ENCODE measurements at regions of chr13 and their contacts with region 1.

Region 1: GRCh38 chr13:26017196-26017921 is 34.5 kb downstream of the SHISA2 start:
- DNase-seq: no peak
- H3K4me3 ChIP-seq: no peak overlapping the region
- H3K27ac ChIP-seq: peak overlapping the region; percentile 89
- H3K4me1 ChIP-seq: peaks cover 81% of the 10 kb centered on the region
- H3K27me3 ChIP-seq: no peaks in the 10 kb centered on the region
- CTCF ChIP-seq: no peak
- POLR2A ChIP-seq: no peak

Region 2: DNA sequence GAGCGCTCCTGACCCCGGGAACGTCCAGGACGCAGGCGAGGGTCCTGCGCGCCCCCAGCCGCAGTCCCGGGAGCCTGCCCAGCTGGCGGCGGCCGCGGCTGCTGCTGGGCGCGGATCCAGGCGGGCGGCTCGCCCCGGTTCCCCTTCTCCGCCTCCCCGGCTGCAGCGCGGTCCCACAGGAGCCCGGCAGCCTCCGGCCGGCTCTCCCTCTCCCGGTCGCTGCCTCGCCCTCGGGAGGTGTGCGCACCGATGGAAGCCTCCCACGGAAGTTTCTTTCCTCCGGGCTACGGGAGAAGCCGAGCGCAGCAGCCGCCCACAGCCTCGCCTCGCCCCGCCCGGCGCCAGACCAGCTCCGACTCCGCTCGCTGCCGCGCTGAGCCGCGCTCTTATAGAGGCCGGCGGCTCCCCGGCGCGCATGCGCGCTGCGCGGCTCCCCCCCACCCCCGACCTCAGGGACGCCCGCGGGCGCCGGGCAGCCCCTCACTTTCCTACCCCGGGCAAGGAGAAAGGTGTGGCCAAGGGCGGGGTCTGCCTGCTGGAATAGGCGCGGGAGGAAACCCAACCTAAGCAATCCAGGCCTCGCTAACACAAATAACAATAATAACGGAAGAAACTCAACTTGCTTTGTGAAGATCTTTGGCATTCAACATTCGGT is 34.4 kb after region 1 on chr13 and contains the start of gene SHISA2:
- CTCF ChIA-PET with region 1: interaction called, 8 read pairs
- POLR2A ChIA-PET with region 1: interaction called, 5 read pairs
- dilution Hi-C with region 1: no loop called
- intact Hi-C with region 1: loop called (anchors 1 kb)
- DNase-seq: peak; percentile 69
- H3K4me3 ChIP-seq: peak within 1 kb of the TSS; percentile 42 to 89 (median 50)
- H3K27ac ChIP-seq: no peak within 1 kb of the TSS
- H3K4me1 ChIP-seq: peaks cover 19% of the 10 kb centered on the region
- H3K27me3 ChIP-seq: peaks cover 10% of the 10 kb centered on the region in 2 experiments
- CTCF ChIP-seq: no peak
- POLR2A ChIP-seq: peak; percentile 92
- total RNA-seq, gene SHISA2: 2.5 and 4.7 TPM in 2 replicates